ENCODE measurements at regions of chr17 and their contacts with region 1.

Region 1: DNA sequence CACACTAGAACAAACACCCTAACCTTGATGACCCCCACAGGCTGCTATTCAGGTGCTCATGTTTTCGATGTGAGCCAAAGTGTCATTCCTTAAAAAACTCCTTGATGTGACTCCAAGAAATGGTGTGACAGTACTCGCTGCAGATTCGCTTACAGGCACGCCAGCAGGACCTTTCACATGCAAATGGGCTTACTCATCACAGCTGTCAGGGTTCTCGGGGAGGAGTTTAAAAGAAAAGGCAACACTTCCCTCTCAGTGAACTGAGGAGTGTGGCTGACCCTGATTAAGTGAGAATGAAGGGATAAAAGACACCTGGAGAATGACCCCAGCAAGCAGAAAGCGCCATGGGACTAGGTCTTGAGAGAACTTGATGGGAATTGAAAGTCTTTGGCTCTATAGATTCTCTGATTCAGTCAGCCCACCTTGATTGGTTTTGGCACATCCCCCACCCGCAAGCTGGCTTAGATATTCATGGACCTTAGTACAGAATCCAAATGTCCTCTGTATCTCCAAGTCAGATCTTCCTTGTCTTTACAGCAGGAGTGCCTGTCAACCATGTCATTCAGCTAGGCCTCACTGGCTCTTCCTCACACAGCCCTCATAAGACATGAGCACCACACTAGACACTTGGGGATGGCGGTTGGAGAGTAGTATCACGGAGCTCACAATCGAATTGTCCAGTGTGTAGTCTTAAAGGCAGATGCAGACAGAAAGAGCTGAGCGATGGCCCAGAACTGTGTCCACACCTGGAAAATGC is 82.6 kb downstream of the HIC1 start:
- DNase-seq: peak; percentile 61
- H3K4me3 Mint-ChIP-seq: no peak overlapping the region
- H3K27ac Mint-ChIP-seq: peak overlapping the region; percentile 57
- H3K4me1 Mint-ChIP-seq: peaks cover 22% of the 10 kb centered on the region
- H3K27me3 Mint-ChIP-seq: no peaks in the 10 kb centered on the region
- CTCF ChIP-seq: no peak

Region 2: GRCh38 chr17:2157675-2158395 is 20.3 kb after region 1 on chr17:
- CTCF ChIA-PET with region 1: no interaction called
- POLR2A ChIA-PET with region 1: interaction called, 11 read pairs
- intact Hi-C with region 1: no loop called
- DNase-seq: peak; percentile 92
- H3K4me3 Mint-ChIP-seq: peak overlapping the region; percentile 33
- H3K27ac Mint-ChIP-seq: peak overlapping the region; percentile 92
- H3K4me1 Mint-ChIP-seq: peaks cover 20% of the 10 kb centered on the region
- H3K27me3 Mint-ChIP-seq: no peaks in the 10 kb centered on the region
- CTCF ChIP-seq: no peak